ENCODE measurements at regions of chr19 and their contacts with region 1.

Region 1: GRCh38 chr19:41859618-41860418 is at the start of gene RPS19:
- DNase-seq: peak; percentile 97
- CTCF ChIP-seq: peak; percentile 30

Region 2: DNA sequence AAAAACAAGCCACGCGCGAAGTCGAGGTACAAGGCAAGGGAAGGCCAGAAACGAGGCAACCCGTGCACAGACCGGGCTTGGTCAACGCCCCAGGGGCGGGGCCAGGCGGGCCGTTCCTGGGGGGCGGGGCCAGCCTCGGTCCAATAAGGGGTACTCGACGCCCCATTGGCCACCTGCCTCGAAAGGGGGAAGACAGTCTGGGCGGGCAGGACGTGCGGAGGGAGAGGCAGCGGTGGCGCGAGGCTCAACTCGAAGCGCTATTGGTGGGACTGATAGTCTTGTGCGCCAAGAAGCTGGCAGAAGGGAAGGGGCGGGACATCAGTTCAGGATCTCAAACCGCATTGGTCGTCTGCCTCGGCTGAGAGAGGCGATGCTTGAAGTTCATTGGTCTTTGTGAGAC is 15.2 kb before region 1 on chr19 and contains the start of gene LYPD4:
- CTCF ChIA-PET with region 1: interaction called, 10 read pairs
- POLR2A ChIA-PET with region 1: interaction called, 12 read pairs
- DNase-seq: no peak
- CTCF ChIP-seq: no peak

Region 3: DNA sequence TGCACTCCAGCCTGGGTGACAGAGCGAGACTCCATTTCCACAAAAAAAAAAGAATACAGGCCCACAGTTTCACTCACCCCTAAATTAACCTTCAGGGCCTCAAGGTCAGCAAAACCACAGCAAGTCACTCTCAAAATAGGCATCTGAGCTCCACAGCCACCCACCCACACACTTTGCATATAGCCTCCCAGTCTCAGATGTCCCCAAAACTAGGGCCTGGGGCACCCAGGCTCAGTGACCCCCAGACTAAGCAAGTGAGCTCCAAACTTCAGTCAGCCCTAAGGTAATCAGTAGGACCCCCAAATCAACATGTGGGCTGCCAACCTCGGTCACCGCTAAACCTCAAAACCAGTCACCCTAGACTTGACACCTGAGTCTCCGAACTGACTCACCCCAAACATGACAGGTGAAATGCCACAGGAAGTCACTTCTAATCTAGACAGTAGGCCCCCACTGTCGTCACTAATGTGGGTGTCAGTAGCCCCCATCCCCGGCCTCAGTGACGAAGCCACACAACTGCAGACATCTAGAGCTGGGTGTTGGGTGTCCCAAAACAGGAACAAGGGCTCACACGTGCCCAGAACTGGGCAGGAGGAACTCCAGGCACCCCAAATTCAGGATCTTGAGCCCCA is 85.4 kb after region 1 on chr19:
- CTCF ChIA-PET with region 1: interaction called, 33 read pairs
- POLR2A ChIA-PET with region 1: interaction called, 12 read pairs
- DNase-seq: peak; percentile 88
- CTCF ChIP-seq: no peak

Region 4: GRCh38 chr19:41959056-41960053 is 99.5 kb after region 1 on chr19 and contains the start of gene RABAC1:
- CTCF ChIA-PET with region 1: interaction called, 17 read pairs
- POLR2A ChIA-PET with region 1: interaction called, 4 read pairs
- DNase-seq: peak; percentile 95
- CTCF ChIP-seq: peak; percentile 32

Measured in GM10248 (cell line).